B cell (primary cell): ENCODE measurements at regions of chr3 and their contacts with region 1.

Region 1: GRCh38 chr3:48240711-48241491 is at the start of gene ZNF589:
- DNase-seq: peak; percentile 96
- ATAC-seq: peak; percentile 95
- H3K4me3 ChIP-seq: peak within 1 kb of the TSS; percentile 69 to 95 (median 70)
- H3K4me3 Mint-ChIP-seq: peak within 1 kb of the TSS; percentile 97
- H3K27ac ChIP-seq: peak within 1 kb of the TSS; percentile 78 to 79
- H3K27ac Mint-ChIP-seq: peak within 1 kb of the TSS; percentile 98
- H3K4me1 ChIP-seq: peaks cover 3 to 24% of the 10 kb centered on the region in 2 donors
- H3K4me1 Mint-ChIP-seq: peaks cover 24% of the 10 kb centered on the region
- H3K27me3 ChIP-seq: no peaks in the 10 kb centered on the region
- H3K27me3 Mint-ChIP-seq: no peaks in the 10 kb centered on the region
- CTCF ChIP-seq: peak; percentile 29
- total RNA-seq, gene ZNF589: 29.8 and 34.7 TPM in 2 replicates

Region 2: DNA sequence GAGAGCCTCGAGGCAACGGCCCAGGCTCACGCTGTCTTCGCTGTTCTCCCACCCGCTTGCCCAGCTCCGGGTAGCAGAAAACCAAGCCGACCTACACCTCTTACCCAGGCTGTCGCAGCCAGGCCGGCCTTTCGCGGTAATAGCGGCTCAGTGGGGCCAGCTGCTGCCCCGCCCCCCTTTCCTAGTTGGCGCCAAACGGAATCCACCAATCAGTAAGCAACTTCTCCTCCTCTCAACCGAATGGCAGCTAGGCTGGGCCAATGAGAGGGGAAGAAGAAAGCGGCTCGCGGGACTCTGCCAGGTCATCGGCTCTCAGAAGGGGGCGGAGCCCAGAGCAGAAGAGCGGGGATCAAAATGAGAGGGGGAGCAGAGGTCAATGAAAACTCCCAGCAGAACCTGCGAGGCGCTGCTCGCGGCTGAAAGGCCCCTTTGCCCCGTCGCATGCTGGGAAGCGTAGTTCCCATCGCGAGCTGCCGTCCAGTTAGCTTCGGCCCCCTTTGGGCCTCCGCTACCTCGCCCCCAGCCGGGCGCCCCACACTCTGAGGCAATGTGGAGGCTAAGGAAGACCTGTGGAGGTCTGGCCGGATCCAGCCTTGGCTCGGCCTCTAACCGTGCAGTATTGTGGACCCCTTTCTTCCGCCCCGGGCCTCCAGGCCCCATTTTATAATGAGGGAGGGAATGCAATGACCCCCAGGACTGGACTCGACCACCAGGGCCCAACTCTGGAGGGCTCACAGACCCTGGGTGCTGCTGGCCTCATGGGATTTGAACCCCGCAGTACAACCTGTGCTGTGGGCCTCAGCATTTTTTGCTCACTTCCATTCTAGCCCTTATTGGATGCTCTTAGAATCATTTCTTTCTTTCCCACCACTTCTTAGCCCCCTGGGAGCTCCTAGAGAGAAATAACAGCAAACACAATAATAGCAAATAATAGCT is 52.4 kb before region 1 on chr3 and contains the start of gene CDC25A:
- CTCF ChIA-PET with region 1: interaction called, 8 read pairs
- POLR2A ChIA-PET with region 1: interaction called, 6 read pairs
- intact Hi-C with region 1: loop called (anchors 1 kb)
- DNase-seq: peak; percentile 97
- ATAC-seq: peak; percentile 99
- H3K4me3 ChIP-seq: peak within 1 kb of the TSS; percentile 51 to 96 (median 76)
- H3K4me3 Mint-ChIP-seq: peak within 1 kb of the TSS; percentile 94
- H3K27ac ChIP-seq: peak within 1 kb of the TSS; percentile 38 to 71
- H3K27ac Mint-ChIP-seq: peak within 1 kb of the TSS; percentile 84
- H3K4me1 ChIP-seq: peaks cover 12 to 15% of the 10 kb centered on the region in 2 donors
- H3K4me1 Mint-ChIP-seq: peaks cover 15% of the 10 kb centered on the region
- H3K27me3 ChIP-seq: peaks cover 0 to 19% (median 8%) of the 10 kb centered on the region in 4 experiments
- H3K27me3 Mint-ChIP-seq: peaks cover 17% of the 10 kb centered on the region
- CTCF ChIP-seq: no peak
- total RNA-seq, gene CDC25A: 0.07 and 0.53 TPM in 2 replicates

Region 3: DNA sequence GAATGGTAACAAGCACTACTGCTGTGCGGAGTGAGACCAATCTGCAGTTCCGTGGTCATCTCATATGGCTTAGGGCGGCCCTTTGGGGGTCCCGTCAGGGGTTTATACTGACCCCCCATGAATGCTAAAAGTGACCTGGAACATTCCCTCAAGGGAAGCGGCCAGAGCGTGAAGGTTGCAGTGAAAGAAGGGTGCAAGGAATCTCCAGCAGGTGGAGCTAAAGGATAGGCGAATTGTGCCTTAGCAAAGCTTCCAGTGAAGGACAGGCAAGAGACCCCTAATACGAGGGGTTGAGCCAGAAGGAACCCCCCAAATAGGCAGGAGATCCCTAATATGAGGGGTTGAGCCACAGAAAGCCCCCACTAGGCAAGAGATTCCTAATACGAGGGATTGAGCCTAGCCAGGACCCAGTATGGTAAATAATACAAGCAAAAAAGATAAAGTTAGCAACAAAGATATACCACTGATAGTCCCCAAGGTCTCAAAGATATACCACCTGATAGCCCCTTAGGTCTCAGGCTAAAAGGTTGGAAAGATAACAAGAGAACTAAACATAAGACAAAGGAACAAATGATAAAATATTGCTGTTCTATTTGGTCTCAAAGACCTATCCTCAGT is 32.8 kb after region 1 on chr3:
- CTCF ChIA-PET with region 1: no interaction called
- POLR2A ChIA-PET with region 1: no interaction called
- intact Hi-C with region 1: no loop called
- DNase-seq: peak; percentile 78
- ATAC-seq: peak; percentile 63
- H3K4me3 ChIP-seq: no peak overlapping the region
- H3K4me3 Mint-ChIP-seq: no peak overlapping the region
- H3K27ac ChIP-seq: no peak overlapping the region
- H3K27ac Mint-ChIP-seq: no peak overlapping the region
- H3K4me1 ChIP-seq: no peaks in the 10 kb centered on the region
- H3K4me1 Mint-ChIP-seq: no peaks in the 10 kb centered on the region
- H3K27me3 ChIP-seq: no peaks in the 10 kb centered on the region
- H3K27me3 Mint-ChIP-seq: no peaks in the 10 kb centered on the region
- CTCF ChIP-seq: peak; percentile 79

Region 4: GRCh38 chr3:48301020-48301796 is 60.3 kb after region 1 on chr3:
- CTCF ChIA-PET with region 1: interaction called, 6 read pairs
- POLR2A ChIA-PET with region 1: interaction called, 10 read pairs
- intact Hi-C with region 1: loop called (anchors 1 kb)
- DNase-seq: peak; percentile 94
- ATAC-seq: peak; percentile 91
- H3K4me3 ChIP-seq: peak within 1 kb of the TSS; percentile 41 to 90 (median 82)
- H3K4me3 Mint-ChIP-seq: peak within 1 kb of the TSS; percentile 97
- H3K27ac ChIP-seq: peak within 1 kb of the TSS; percentile 92 to 96
- H3K27ac Mint-ChIP-seq: peak within 1 kb of the TSS; percentile 99
- H3K4me1 ChIP-seq: peaks cover 17 to 25% of the 10 kb centered on the region in 2 donors
- H3K4me1 Mint-ChIP-seq: peaks cover 55% of the 10 kb centered on the region
- H3K27me3 ChIP-seq: no peaks in the 10 kb centered on the region
- H3K27me3 Mint-ChIP-seq: no peaks in the 10 kb centered on the region
- CTCF ChIP-seq: no peak

Region 5: DNA sequence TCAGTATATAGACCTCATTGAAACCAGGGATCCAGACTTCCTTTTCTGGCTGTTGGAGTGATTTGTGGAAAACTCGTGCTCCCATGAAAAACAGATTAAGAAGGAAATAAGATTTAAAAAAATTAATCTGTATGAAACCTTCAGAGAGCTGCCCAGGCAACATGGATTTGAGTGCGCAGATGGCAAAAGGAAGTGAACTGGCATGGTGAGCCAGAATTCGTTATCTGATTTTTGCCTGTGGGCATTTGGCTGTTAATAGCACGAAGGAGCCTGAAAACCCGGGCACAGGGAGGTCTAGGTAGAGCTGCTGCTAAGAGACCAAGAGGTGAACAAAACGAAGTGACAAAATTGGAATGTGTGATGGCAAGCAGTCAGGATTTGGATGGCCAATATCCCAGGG is 111.6 kb after region 1 on chr3:
- CTCF ChIA-PET with region 1: no interaction called
- POLR2A ChIA-PET with region 1: no interaction called
- intact Hi-C with region 1: no loop called
- DNase-seq: no peak
- ATAC-seq: no peak
- H3K4me3 ChIP-seq: no peak overlapping the region
- H3K4me3 Mint-ChIP-seq: no peak overlapping the region
- H3K27ac ChIP-seq: no peak overlapping the region
- H3K27ac Mint-ChIP-seq: no peak overlapping the region
- H3K4me1 ChIP-seq: no peaks in the 10 kb centered on the region
- H3K4me1 Mint-ChIP-seq: no peaks in the 10 kb centered on the region
- H3K27me3 ChIP-seq: peaks cover 0 to 21% (median 7%) of the 10 kb centered on the region in 4 experiments
- H3K27me3 Mint-ChIP-seq: peaks cover 42% of the 10 kb centered on the region
- CTCF ChIP-seq: no peak

Region 6: GRCh38 chr3:48609088-48610005 is 368.4 kb after region 1 on chr3 and contains the start of gene UQCRC1:
- CTCF ChIA-PET with region 1: no interaction called
- POLR2A ChIA-PET with region 1: no interaction called
- intact Hi-C with region 1: loop called (anchors 1 kb)
- DNase-seq: peak; percentile 95
- ATAC-seq: peak; percentile 99
- H3K4me3 ChIP-seq: peak within 1 kb of the TSS; percentile 68 to 99 (median 94)
- H3K4me3 Mint-ChIP-seq: peak within 1 kb of the TSS; percentile 100
- H3K27ac ChIP-seq: peak within 1 kb of the TSS; percentile 72 to 90
- H3K27ac Mint-ChIP-seq: peak within 1 kb of the TSS; percentile 98
- H3K4me1 ChIP-seq: peaks cover 10 to 14% of the 10 kb centered on the region in 2 donors
- H3K4me1 Mint-ChIP-seq: peaks cover 15% of the 10 kb centered on the region
- H3K27me3 ChIP-seq: no peaks in the 10 kb centered on the region
- H3K27me3 Mint-ChIP-seq: no peaks in the 10 kb centered on the region
- CTCF ChIP-seq: peak; percentile 81
- total RNA-seq, gene UQCRC1: 98.9 and 99.9 TPM in 2 replicates

Region 7: DNA sequence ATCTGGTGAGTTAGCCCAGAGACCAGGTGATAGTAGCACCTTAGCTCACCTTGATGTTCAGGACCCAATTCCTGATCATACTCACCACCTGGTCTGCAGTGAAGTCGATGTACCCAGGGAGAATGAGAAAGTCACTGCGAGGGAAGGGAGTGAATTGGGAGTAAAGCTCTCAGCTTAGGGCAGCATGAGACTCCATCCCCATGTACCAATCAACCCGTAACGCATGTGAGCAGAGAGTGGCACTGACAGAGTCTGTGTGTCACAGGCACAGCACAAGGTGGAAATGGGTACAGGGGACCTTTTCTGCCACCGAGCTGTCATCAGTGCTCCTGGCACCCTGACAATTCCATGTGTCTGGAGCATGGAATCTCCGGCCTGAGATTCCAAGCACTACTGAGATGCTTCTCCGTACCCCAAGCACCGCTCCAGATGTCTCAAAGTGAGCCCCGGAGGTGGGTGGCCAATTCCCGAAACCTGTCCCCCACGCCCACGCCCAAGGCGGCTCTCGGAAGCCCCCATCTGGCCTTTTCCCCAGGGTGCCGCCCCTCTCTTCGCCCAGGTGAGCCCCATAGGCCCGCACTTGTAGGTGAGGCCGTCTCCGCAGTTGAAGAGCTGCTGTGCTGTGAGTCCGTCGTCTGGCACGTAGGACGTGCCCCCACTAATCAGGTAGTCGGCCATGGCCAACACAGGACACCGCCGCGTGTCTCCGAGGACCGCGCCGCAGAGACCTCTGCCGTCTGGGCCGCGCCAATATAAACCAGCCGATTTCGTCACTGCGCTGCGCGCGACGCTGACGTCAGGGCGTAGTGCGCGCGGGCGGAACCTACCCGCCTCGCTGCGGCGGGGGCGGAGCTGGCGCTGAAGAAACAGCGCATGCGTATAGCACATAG is 788.0 kb after region 1 on chr3 and contains the start of gene IMPDH2:
- CTCF ChIA-PET with region 1: no interaction called
- POLR2A ChIA-PET with region 1: no interaction called
- intact Hi-C with region 1: loop called (anchors 5 kb)
- DNase-seq: peak; percentile 98
- ATAC-seq: peak; percentile 93
- H3K4me3 ChIP-seq: peak within 1 kb of the TSS; percentile 72 to 93 (median 73)
- H3K4me3 Mint-ChIP-seq: peak within 1 kb of the TSS; percentile 98
- H3K27ac ChIP-seq: peak within 1 kb of the TSS; percentile 86 to 92
- H3K27ac Mint-ChIP-seq: peak within 1 kb of the TSS; percentile 98
- H3K4me1 ChIP-seq: peaks cover 14 to 39% of the 10 kb centered on the region in 2 donors
- H3K4me1 Mint-ChIP-seq: peaks cover 45% of the 10 kb centered on the region
- H3K27me3 ChIP-seq: no peaks in the 10 kb centered on the region
- H3K27me3 Mint-ChIP-seq: no peaks in the 10 kb centered on the region
- CTCF ChIP-seq: no peak
- total RNA-seq, gene IMPDH2: 186 and 193 TPM in 2 replicates